ENCODE measurements at regions of chr14 and their contacts with region 1.

Region 1: GRCh38 chr14:22994762-22995275 is 12.5 kb upstream of the AJUBA start:
- DNase-seq: no peak
- H3K4me3 ChIP-seq: no peak overlapping the region
- CTCF ChIP-seq: peak; percentile 80

Region 2: DNA sequence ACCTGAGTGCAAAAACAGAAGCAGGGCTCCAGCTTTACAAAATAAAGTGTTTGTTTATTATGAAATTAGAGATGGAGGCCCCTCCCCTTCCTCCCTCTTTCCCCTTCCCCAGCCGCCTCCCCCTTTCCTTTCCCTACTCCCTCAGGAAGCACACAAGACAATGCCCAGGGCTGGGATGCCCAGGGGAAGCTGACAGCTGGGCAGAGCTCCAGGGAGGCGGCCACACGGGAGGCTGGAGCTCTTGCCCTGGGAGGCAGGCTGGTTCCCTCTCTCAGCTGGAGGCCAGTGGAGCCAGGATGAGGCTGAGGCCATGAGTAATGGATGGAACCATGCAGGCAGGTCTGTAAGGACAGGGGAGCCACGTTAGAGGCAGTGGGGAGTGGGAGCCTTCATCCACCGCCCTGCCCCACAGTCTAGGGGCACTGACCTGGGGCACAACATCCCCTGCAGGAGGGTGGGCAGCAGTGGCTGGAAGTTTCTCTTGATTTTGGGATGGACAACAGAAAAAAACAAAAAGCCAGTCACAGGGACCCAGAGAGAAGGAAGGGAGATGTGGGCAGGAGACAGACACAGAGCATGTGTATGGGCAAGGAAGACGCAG is 52.3 kb after region 1 on chr14:
- in situ Hi-C with region 1: loop called (anchors 10 kb)
- DNase-seq: no peak
- H3K4me3 ChIP-seq: no peak overlapping the region
- CTCF ChIP-seq: no peak

Region 3: DNA sequence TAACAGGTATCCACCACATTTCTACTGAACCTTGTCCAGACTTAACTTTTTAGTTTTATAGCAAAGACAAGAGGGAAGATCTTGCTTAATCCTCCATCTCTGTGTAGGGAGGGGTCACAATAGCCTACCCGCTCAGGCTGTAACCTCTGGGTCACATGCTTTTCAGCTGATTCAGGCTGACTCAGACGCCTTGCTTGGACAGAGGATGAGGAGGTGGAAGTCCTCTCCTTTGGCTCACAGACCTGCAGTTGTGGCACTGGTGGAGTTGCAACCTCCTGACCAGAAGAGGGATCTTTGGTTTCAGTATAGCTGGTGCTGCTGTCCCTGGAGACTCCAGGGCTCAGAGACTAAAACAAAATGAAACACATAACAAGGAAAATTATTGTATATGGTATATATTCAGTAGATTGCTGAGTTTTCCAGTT is 83.9 kb after region 1 on chr14:
- in situ Hi-C with region 1: no loop called
- DNase-seq: peak; percentile 55
- H3K4me3 ChIP-seq: no peak overlapping the region
- CTCF ChIP-seq: peak; percentile 6

Region 4: GRCh38 chr14:23228812-23229211 is 234.0 kb after region 1 on chr14:
- in situ Hi-C with region 1: no loop called
- DNase-seq: no peak
- H3K4me3 ChIP-seq: no peak overlapping the region
- CTCF ChIP-seq: no peak